Naive thymus-derived CD4-positive, alpha-beta T cell (primary cell): ENCODE measurements at regions of chr6 and their contacts with region 1.

Region 1: GRCh38 chr6:47309291-47310130 is at the start of gene TNFRSF21:
- DNase-seq: peak; percentile 52 to 87 (median 68)
- ATAC-seq: peak; percentile 95
- H3K4me3 ChIP-seq: peak within 1 kb of the TSS; percentile 66
- H3K4me3 Mint-ChIP-seq: peak within 1 kb of the TSS; percentile 68 to 81 (median 76)
- H3K27ac ChIP-seq: no peak within 1 kb of the TSS
- H3K27ac Mint-ChIP-seq: peak within 1 kb of the TSS in 1 of 9 donors; percentile 68
- H3K4me1 ChIP-seq: no peaks in the 10 kb centered on the region
- H3K4me1 Mint-ChIP-seq: peaks cover 0 to 11% (median 10%) of the 10 kb centered on the region in 7 donors
- H3K27me3 ChIP-seq: no peaks in the 10 kb centered on the region
- H3K27me3 Mint-ChIP-seq: peaks cover 51 to 77% (median 53%) of the 10 kb centered on the region in 5 donors
- total RNA-seq, gene TNFRSF21: 0.27 to 2.4 (median 0.44) TPM

Region 2: DNA sequence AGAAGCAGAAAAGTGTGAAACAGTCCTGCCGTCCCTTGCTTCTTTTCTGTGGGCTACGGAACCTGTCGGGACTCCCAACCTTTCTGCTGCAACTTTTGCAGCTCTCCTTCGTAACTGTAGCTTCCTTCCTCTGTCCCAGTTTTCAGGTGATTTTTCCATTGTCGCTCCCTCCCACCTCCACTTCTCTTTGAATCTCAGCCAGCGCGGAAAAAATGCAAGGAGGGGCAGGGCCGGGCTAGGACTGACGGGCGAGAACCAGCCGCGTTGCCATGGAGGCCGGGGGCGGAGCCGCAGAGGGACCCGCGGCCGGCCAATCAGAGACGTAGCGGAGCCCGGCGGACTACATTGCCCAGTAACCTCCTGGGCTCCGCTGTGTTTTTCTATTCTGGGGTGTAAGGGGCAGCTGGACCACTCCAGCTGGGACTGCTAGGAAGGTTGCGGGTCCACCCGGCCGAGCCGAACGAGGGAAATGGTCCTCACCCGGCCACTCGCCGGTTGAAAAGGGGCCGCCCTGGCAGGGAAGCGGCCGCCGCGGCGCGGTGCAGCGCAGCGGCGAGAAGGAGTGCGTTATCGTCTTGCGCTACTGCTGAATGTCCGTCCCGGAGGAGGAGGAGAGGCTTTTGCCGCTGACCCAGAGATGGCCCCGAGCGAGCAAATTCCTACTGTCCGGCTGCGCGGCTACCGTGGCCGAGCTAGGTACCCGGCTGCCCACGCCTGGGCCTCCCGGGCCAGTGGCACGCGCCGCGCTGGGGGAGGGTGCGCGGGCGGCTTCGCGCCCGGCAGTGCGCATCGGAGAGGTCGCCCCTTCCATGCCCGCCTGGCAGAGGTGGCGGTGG is 656.7 kb before region 1 on chr6 and contains the starts of genes CYP39A1 and SLC25A27:
- CTCF ChIA-PET with region 1: no interaction called
- POLR2A ChIA-PET with region 1: no interaction called
- intact Hi-C with region 1: loop called in 1 of 2 experiments (anchors 5 kb)
- DNase-seq: peak; percentile 58 to 84 (median 64)
- ATAC-seq: peak; percentile 99
- H3K4me3 ChIP-seq: peak within 1 kb of the TSS; percentile 75
- H3K4me3 Mint-ChIP-seq: peak within 1 kb of the TSS; percentile 84 to 96 (median 89)
- H3K27ac ChIP-seq: no peak within 1 kb of the TSS
- H3K27ac Mint-ChIP-seq: peak within 1 kb of the TSS in 3 of 9 donors; percentile 36 to 79 (median 62)
- H3K4me1 ChIP-seq: peaks cover 4 to 9% of the 10 kb centered on the region in 2 donors
- H3K4me1 Mint-ChIP-seq: peaks cover 11 to 17% (median 14%) of the 10 kb centered on the region in 7 donors
- H3K27me3 ChIP-seq: peaks cover 0 to 15% of the 10 kb centered on the region in 2 donors
- H3K27me3 Mint-ChIP-seq: peaks cover 44 to 64% (median 53%) of the 10 kb centered on the region in 5 donors
- total RNA-seq, gene CYP39A1: not detected
- total RNA-seq, gene SLC25A27: 0.50 to 5.7 (median 2.6) TPM in 4 of 5 experiments, not detected in the other

Region 3: GRCh38 chr6:46848684-46849360 is 460.7 kb before region 1 on chr6:
- CTCF ChIA-PET with region 1: no interaction called
- POLR2A ChIA-PET with region 1: no interaction called
- intact Hi-C with region 1: loop called in 1 of 2 experiments (anchors 1 kb)
- DNase-seq: peak in 8 of 9 donors; percentile 18 to 72 (median 38)
- ATAC-seq: peak; percentile 87
- H3K4me3 ChIP-seq: no peak overlapping the region
- H3K4me3 Mint-ChIP-seq: peak overlapping the region in 7 of 10 donors; percentile 7 to 68 (median 58)
- H3K27ac ChIP-seq: no peak overlapping the region
- H3K27ac Mint-ChIP-seq: no peak overlapping the region
- H3K4me1 ChIP-seq: no peaks in the 10 kb centered on the region
- H3K4me1 Mint-ChIP-seq: peaks cover 4 to 7% (median 6%) of the 10 kb centered on the region in 7 donors
- H3K27me3 ChIP-seq: no peaks in the 10 kb centered on the region
- H3K27me3 Mint-ChIP-seq: peaks cover 13 to 33% (median 25%) of the 10 kb centered on the region in 5 donors

Region 4: DNA sequence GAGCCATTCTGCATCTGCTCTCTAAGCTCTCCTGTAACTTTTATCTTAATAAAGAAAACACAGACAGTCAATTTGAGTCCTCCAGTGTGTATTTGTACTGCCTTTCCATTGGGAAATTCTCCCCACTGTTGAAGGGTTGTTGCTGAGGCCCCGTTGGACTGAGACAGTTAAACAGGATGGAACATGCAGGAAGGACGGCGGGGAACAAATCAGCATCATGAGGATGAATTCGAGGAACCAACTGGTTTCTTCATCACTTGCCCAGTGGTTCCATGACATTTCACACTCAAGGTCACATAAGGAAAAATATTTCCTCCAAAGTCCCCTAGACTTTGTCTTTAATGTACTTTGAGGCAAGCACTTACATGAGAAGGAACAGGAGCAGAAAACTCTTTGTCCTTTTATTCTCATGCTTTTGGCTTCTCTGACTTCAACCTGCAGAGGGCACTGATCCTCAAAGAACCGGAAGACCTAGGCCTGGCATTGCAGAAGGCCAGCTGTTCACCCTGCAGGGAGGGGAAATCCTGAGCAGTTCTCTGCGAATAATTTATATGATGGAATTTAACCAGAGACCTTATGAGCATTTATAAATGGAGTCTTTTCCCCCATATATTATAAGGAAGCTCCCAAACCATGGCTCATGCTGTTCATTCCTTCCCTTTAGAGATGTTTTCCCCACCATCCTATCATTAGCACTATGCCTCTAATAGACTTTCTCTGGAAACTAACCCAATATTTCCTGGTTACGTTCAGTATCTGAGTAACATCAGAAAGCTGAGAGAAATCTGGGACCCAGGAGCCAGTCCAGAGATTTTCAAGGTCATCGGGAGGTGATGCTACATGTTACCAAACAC is 212.2 kb before region 1 on chr6:
- CTCF ChIA-PET with region 1: interaction called, 8 read pairs
- POLR2A ChIA-PET with region 1: no interaction called
- intact Hi-C with region 1: loop called in 1 of 2 experiments (anchors 1 kb)
- DNase-seq: peak in 7 of 9 donors; percentile 8 to 49 (median 30)
- ATAC-seq: peak; percentile 74
- H3K4me3 ChIP-seq: no peak overlapping the region
- H3K4me3 Mint-ChIP-seq: no peak overlapping the region
- H3K27ac ChIP-seq: no peak overlapping the region
- H3K27ac Mint-ChIP-seq: no peak overlapping the region
- H3K4me1 ChIP-seq: no peaks in the 10 kb centered on the region
- H3K4me1 Mint-ChIP-seq: no peaks in the 10 kb centered on the region
- H3K27me3 ChIP-seq: no peaks in the 10 kb centered on the region
- H3K27me3 Mint-ChIP-seq: peaks cover 0 to 10% (median 3%) of the 10 kb centered on the region in 5 donors

Region 5: GRCh38 chr6:47242483-47243386 is 66.8 kb before region 1 on chr6:
- CTCF ChIA-PET with region 1: no interaction called
- POLR2A ChIA-PET with region 1: no interaction called
- intact Hi-C with region 1: loop called (anchors 2 to 5 kb)
- DNase-seq: peak; percentile 30 to 82 (median 71)
- ATAC-seq: peak; percentile 96
- H3K4me3 ChIP-seq: no peak overlapping the region
- H3K4me3 Mint-ChIP-seq: peak overlapping the region in 9 of 10 donors; percentile 15 to 65 (median 31)
- H3K27ac ChIP-seq: no peak overlapping the region
- H3K27ac Mint-ChIP-seq: peak overlapping the region in 7 of 9 donors; percentile 25 to 81 (median 52)
- H3K4me1 ChIP-seq: peaks cover 0 to 20% of the 10 kb centered on the region in 2 donors
- H3K4me1 Mint-ChIP-seq: peaks cover 14 to 67% (median 51%) of the 10 kb centered on the region in 7 donors
- H3K27me3 ChIP-seq: no peaks in the 10 kb centered on the region
- H3K27me3 Mint-ChIP-seq: no peaks in the 10 kb centered on the region

Region 6: DNA sequence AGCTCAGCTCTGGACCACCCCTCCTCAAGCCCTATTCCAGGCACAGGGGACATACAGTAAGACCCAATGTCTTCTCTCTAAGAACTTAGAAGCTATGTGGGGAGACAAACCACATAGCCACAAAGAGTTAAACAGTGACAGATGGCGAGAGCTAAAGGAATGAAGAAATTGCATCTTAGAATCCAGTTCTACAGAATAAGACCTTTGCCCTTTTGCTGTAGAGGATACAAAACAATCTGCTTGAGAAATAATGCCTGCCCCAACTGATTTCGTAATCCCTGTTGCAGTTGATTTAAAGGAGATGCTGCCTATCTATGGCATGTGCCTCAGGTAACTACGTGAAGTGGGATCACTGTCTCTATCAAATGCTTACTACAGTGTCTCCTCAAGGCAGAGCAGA is 31.0 kb before region 1 on chr6:
- CTCF ChIA-PET with region 1: no interaction called
- POLR2A ChIA-PET with region 1: no interaction called
- intact Hi-C with region 1: no loop called
- DNase-seq: no peak
- ATAC-seq: no peak
- H3K4me3 ChIP-seq: no peak overlapping the region
- H3K4me3 Mint-ChIP-seq: no peak overlapping the region
- H3K27ac ChIP-seq: no peak overlapping the region
- H3K27ac Mint-ChIP-seq: no peak overlapping the region
- H3K4me1 ChIP-seq: no peaks in the 10 kb centered on the region
- H3K4me1 Mint-ChIP-seq: no peaks in the 10 kb centered on the region
- H3K27me3 ChIP-seq: no peaks in the 10 kb centered on the region
- H3K27me3 Mint-ChIP-seq: no peaks in the 10 kb centered on the region